Activated CD4-positive, alpha-beta T cell treated with anti-CD3 and anti-CD28 coated beads, Interleukin-2, amount 10 ng/mL, durations not matched to agents 7 days and 5 days (primary cell): ENCODE measurements at regions of chr17 and their contacts with region 1.

Region 1: GRCh38 chr17:27332485-27333409 is 38.8 kb downstream of the WSB1 start:
- DNase-seq: peak; percentile 87
- H3K4me3 Mint-ChIP-seq: peak overlapping the region; percentile 68
- H3K27ac Mint-ChIP-seq: peak overlapping the region; percentile 77
- H3K4me1 Mint-ChIP-seq: peaks cover 24% of the 10 kb centered on the region
- H3K27me3 Mint-ChIP-seq: no peaks in the 10 kb centered on the region

Region 2: GRCh38 chr17:27236717-27237315 is 95.9 kb before region 1 on chr17:
- CTCF ChIA-PET with region 1: interaction called, 29 read pairs
- POLR2A ChIA-PET with region 1: interaction called, 3 read pairs
- DNase-seq: peak; percentile 77
- H3K4me3 Mint-ChIP-seq: no peak overlapping the region
- H3K27ac Mint-ChIP-seq: no peak overlapping the region
- H3K4me1 Mint-ChIP-seq: peaks cover 19% of the 10 kb centered on the region
- H3K27me3 Mint-ChIP-seq: peaks cover 4% of the 10 kb centered on the region

Region 3: GRCh38 chr17:27290916-27291598 is 41.7 kb before region 1 on chr17:
- CTCF ChIA-PET with region 1: interaction called, 10 read pairs
- POLR2A ChIA-PET with region 1: interaction called, 4 read pairs
- DNase-seq: no peak
- H3K4me3 Mint-ChIP-seq: no peak overlapping the region
- H3K27ac Mint-ChIP-seq: no peak overlapping the region
- H3K4me1 Mint-ChIP-seq: peaks cover 17% of the 10 kb centered on the region
- H3K27me3 Mint-ChIP-seq: peaks cover 7% of the 10 kb centered on the region